CD8-positive, alpha-beta T cell (primary cell): ENCODE measurements at regions of chr2 and their contacts with region 1.

Region 1: DNA sequence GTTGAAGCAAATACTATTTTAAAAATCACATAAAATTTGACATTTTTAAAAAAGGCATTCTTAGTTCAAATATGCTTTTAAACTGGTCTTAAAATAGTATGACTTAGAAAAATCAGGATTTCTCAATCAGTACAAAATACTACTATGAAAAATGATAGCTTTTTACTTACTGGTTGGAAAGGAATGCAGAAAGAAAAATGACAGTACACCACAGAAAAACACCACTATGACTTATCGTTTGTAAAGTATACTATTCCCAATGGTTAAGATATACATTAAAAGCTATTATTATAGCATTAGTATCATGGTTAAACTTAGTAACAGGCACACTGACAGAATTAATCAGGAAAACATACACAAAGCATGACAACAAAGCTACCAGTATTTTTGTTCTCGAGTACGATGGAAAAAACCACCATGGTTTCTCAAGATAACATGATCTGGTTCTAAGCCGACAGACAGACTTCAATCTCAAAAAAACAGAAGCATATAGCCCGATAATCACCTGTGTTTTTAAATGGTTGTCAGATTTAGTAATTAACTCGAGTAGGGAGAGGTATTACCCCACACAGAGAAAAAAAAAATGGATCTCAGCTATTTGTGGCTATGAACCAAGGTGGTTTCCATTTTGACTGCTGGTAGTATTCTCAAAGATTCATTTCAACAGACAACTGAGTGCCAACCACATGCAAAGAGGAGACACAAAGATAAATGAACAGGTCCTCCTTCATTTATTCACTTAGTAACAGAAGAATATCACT is 39.1 kb downstream of the CUL3 start:
- DNase-seq: peak in 2 of 9 experiments; percentile 8 to 40
- ATAC-seq: no peak
- H3K4me3 ChIP-seq: no peak overlapping the region
- H3K4me3 Mint-ChIP-seq: no peak overlapping the region
- H3K27ac ChIP-seq: no peak overlapping the region
- H3K27ac Mint-ChIP-seq: no peak overlapping the region
- H3K4me1 ChIP-seq: peaks cover 4% of the 10 kb centered on the region
- H3K4me1 Mint-ChIP-seq: peaks cover 70% of the 10 kb centered on the region
- H3K27me3 ChIP-seq: no peaks in the 10 kb centered on the region
- H3K27me3 Mint-ChIP-seq: no peaks in the 10 kb centered on the region
- CTCF ChIP-seq: no peak

Region 2: DNA sequence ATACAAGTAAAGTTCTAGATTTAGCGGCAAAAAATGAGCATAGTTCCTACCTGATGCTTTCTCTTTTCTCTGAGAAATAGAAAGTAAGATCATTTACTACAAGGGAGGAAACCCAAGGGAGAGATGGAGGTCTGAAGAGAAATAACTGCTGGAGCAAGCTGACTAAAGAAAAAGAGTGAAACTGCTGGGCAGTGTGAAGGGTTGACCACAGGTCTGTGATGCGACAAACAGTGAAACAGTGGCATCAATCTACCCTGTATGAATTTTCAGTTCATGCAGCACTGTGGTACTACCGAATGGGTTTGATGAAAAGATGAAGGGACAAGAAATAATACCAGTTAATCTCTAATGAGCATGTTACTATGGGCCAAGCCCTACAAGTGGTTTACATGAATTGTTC is 13.1 kb before region 1 on chr2:
- CTCF ChIA-PET with region 1: interaction called, 6 read pairs
- POLR2A ChIA-PET with region 1: interaction called, 3 read pairs
- intact Hi-C with region 1: loop called in 1 of 2 experiments (anchors 2 kb)
- DNase-seq: no peak
- ATAC-seq: no peak
- H3K4me3 ChIP-seq: no peak overlapping the region
- H3K4me3 Mint-ChIP-seq: no peak overlapping the region
- H3K27ac ChIP-seq: no peak overlapping the region
- H3K27ac Mint-ChIP-seq: peak overlapping the region; percentile 72
- H3K4me1 ChIP-seq: peaks cover 23% of the 10 kb centered on the region
- H3K4me1 Mint-ChIP-seq: peaks cover 67% of the 10 kb centered on the region
- H3K27me3 ChIP-seq: no peaks in the 10 kb centered on the region
- H3K27me3 Mint-ChIP-seq: no peaks in the 10 kb centered on the region
- CTCF ChIP-seq: no peak

Region 3: DNA sequence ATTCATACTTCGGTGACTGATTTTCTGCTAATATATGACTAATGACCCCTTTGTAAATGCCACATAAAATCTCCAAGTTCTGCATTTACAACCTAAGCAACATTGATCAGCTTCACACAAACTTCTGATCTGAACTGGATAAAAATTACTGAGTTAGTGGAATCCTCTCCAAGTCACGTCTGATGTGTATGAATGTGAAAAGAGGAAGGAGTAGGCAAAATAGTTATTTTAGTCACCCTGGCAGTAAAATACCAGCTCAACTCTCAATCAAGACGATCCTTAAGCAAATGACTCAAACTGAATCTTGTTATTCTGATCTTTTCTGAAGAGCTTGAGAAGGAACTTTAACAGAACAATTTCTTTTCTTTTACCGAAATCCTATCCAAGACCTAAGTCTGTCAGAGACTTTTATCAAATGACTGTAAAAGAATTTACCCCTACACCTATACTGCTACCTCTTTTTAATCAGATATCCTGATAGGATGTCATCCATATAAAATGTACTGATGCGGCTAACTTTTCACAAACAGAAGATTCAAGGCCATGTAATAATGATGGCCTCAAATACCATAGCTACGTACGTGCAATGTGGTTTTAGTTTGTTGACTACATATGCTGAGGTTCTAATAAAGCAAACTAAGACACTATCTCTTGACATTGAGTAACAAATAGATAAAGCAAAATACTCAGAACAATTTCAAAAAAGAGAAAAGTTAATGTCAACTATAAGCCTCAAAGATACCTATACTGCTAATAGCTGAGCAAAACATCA is 15.4 kb after region 1 on chr2:
- CTCF ChIA-PET with region 1: interaction called, 4 read pairs
- POLR2A ChIA-PET with region 1: no interaction called
- intact Hi-C with region 1: loop called in 1 of 2 experiments (anchors 1 kb)
- DNase-seq: no peak
- ATAC-seq: no peak
- H3K4me3 ChIP-seq: no peak overlapping the region
- H3K4me3 Mint-ChIP-seq: no peak overlapping the region
- H3K27ac ChIP-seq: no peak overlapping the region
- H3K27ac Mint-ChIP-seq: no peak overlapping the region
- H3K4me1 ChIP-seq: peaks cover 53% of the 10 kb centered on the region
- H3K4me1 Mint-ChIP-seq: peaks cover 55% of the 10 kb centered on the region
- H3K27me3 ChIP-seq: no peaks in the 10 kb centered on the region
- H3K27me3 Mint-ChIP-seq: no peaks in the 10 kb centered on the region
- CTCF ChIP-seq: no peak